Psoas muscle (tissue), 8 donors: ENCODE measurements at regions of chr12 and their contacts with region 1.

Region 1: GRCh38 chr12:2884810-2885209 is 5.9 kb upstream of the TULP3 start:
- DNase-seq: no peak
- ATAC-seq: no peak
- H3K4me3 ChIP-seq: no peak overlapping the region
- H3K27ac ChIP-seq: no peak overlapping the region
- H3K4me1 ChIP-seq: no peaks in the 10 kb centered on the region
- H3K27me3 ChIP-seq: no peaks in the 10 kb centered on the region
- CTCF ChIP-seq: no peak

Region 2: GRCh38 chr12:2845280-2845679 is 39.5 kb before region 1 on chr12:
- intact Hi-C with region 1: no loop called
- DNase-seq: no peak
- ATAC-seq: peak in 2 of 4 donors; percentile 30 to 35
- H3K4me3 ChIP-seq: no peak overlapping the region
- H3K27ac ChIP-seq: peak overlapping the region; percentile 36
- H3K4me1 ChIP-seq: peaks cover 6% of the 10 kb centered on the region
- H3K27me3 ChIP-seq: no peaks in the 10 kb centered on the region
- CTCF ChIP-seq: no peak

Region 3: DNA sequence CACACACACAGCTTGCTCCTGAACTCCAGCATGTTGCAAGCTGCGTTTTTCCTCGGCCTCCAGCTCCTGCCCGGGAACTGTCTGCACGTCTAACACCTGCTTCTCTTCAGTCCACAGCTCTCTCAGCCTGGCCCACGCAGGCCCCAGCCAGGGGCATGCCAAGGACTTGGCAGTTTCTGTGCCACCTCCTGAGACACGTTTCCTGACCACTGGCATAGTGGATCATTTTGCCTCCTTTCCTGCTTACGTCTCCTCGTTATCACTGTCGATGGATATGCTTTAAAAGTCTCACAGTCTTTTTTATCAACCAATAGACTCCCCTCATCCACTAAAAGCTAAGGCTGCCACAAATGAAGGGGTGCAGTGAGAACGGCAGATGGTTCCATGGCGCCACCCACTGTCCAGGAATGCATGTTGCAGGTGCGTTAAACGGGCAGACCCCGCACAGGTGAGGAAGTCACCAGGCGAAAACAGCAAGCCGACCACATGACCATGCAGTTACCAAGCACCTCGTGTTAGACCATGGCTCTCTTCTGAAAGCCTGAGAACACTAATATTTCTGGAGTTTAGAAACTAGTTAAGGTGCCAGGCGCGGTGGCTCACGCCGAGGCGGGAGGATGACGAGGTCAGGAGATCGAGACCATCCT is 59.7 kb after region 1 on chr12:
- intact Hi-C with region 1: loop called (anchors 2 to 5 kb)
- DNase-seq: peak; percentile 45 to 65
- ATAC-seq: peak; percentile 86 to 93 (median 90)
- H3K4me3 ChIP-seq: peak overlapping the region; percentile 18
- H3K27ac ChIP-seq: peak overlapping the region; percentile 54
- H3K4me1 ChIP-seq: peaks cover 5% of the 10 kb centered on the region
- H3K27me3 ChIP-seq: no peaks in the 10 kb centered on the region
- CTCF ChIP-seq: peak; percentile 77

Region 4: DNA sequence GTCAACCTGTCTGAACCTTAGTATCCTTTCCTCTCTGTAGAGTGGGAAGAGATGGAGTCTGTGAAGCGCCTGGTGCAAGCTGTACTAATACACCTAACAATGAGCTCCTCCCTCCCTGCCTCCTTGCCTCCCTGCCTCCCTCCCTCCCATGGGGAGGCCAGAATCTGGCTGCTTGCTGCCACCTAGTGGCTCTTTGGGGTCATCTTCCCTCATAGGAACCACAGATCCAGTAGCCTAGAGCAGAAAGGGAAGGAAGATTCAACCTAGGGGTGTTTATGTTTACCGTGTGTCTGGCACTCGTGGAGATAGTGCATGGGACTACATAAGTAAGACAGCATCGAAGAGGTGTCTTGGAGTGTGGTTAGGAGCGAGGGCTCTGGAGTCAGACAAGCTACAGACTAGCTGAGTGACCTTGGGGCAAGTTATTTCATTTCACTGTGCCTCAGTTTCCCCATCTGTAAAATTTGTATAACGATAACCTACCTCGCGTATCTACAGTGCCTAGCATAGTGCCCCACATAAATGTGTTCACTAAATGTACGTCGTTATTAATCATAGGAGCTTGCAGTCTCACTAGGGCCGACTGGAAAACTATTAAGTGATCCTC is 156.9 kb after region 1 on chr12:
- intact Hi-C with region 1: loop called (anchors 2 kb)
- DNase-seq: peak; percentile 51 to 80
- ATAC-seq: peak; percentile 43 to 73 (median 60)
- H3K4me3 ChIP-seq: peak overlapping the region; percentile 39
- H3K27ac ChIP-seq: peak overlapping the region; percentile 71
- H3K4me1 ChIP-seq: peaks cover 38% of the 10 kb centered on the region
- H3K27me3 ChIP-seq: no peaks in the 10 kb centered on the region
- CTCF ChIP-seq: peak; percentile 58